H1 (cell line): ENCODE measurements at regions of chr4 and their contacts with region 1.

Region 1: DNA sequence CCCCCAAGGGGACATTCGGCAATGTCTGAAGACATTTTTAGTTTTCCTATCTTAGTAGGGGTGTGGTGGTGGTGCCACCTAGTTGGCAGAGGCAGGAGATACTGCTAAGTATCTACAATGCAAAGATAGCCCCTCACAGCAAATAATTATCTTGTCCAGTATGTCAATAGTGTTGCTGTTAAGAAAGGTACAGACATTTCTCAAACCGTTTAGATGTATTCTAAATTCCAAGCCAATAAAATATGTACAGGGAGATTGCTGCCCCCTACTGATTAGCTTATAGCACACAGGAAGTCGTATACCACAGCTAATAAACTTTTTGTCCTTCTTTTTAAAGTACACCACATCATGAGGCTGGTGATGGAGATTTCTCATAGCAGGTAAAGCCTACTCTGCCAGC is 260.5 kb downstream of the TMA16 start:
- DNase-seq: no peak
- H3K4me3 ChIP-seq: no peak overlapping the region
- H3K27ac ChIP-seq: no peak overlapping the region
- H3K4me1 ChIP-seq: no peaks in the 10 kb centered on the region
- H3K27me3 ChIP-seq: no peaks in the 10 kb centered on the region
- CTCF ChIP-seq: peak in 2 of 3 experiments; percentile 39 to 48; a peak in 3 of 4 replicates
- EP300 ChIP-seq: no peak
- POLR2A ChIP-seq: no peak
- RAD21 ChIP-seq: peak; percentile 66 to 67

Region 2: GRCh38 chr4:163768014-163768413 is 13.0 kb after region 1 on chr4:
- CTCF ChIA-PET with region 1: interaction called, 24 read pairs
- POLR2A ChIA-PET with region 1: no interaction called
- DNase-seq: no peak
- H3K4me3 ChIP-seq: no peak overlapping the region
- H3K27ac ChIP-seq: no peak overlapping the region
- H3K4me1 ChIP-seq: no peaks in the 10 kb centered on the region
- H3K27me3 ChIP-seq: no peaks in the 10 kb centered on the region
- CTCF ChIP-seq: no peak
- EP300 ChIP-seq: no peak
- POLR2A ChIP-seq: no peak
- RAD21 ChIP-seq: no peak

Region 3: DNA sequence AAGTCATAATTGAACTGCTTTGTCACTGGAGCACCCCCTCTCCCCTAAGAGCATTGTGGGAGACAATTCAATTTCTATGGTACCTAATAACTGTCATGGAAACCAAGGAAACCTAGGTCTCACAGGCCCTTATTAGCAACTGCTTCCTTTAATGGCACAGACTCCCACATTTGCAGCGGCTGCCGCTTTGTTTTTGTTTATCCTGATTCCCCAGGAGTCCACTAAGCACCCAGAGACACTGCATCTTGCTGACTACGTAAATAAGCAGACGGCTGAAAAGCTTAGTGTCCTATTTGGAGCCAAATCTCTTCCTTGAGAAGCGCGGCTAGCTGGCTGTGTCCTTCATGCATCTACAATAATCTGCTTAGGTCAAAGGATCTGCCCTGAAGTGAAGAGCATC is 233.9 kb after region 1 on chr4:
- CTCF ChIA-PET with region 1: no interaction called
- POLR2A ChIA-PET with region 1: no interaction called
- DNase-seq: no peak
- H3K4me3 ChIP-seq: no peak overlapping the region
- H3K27ac ChIP-seq: no peak overlapping the region
- H3K4me1 ChIP-seq: peaks cover 0 to 10% (median 8%) of the 10 kb centered on the region in 4 experiments; a peak in 4 of 7 replicates
- H3K27me3 ChIP-seq: no peaks in the 10 kb centered on the region
- CTCF ChIP-seq: no peak
- EP300 ChIP-seq: no peak
- POLR2A ChIP-seq: no peak
- RAD21 ChIP-seq: no peak